Endothelial cell of umbilical vein (primary cell): ENCODE measurements at regions of chr12 and their contacts with region 1.

Region 1: GRCh38 chr12:122190842-122191668 is 8.1 kb downstream of the LRRC43 start:
- DNase-seq: peak; percentile 75
- H3K4me3 ChIP-seq: no peak overlapping the region
- H3K27ac ChIP-seq: no peak overlapping the region
- H3K4me1 ChIP-seq: no peaks in the 10 kb centered on the region
- H3K27me3 ChIP-seq: no peaks in the 10 kb centered on the region
- CTCF ChIP-seq: peak; percentile 78 to 86
- POLR2A ChIP-seq: no peak

Region 2: GRCh38 chr12:122130150-122130549 is 60.9 kb before region 1 on chr12:
- CTCF ChIA-PET with region 1: interaction called, 115 read pairs
- POLR2A ChIA-PET with region 1: interaction called, 8 read pairs
- dilution Hi-C with region 1: no loop called
- intact Hi-C with region 1: loop called (anchors 1 kb)
- DNase-seq: no peak
- H3K4me3 ChIP-seq: no peak overlapping the region
- H3K27ac ChIP-seq: no peak overlapping the region
- H3K4me1 ChIP-seq: no peaks in the 10 kb centered on the region
- H3K27me3 ChIP-seq: no peaks in the 10 kb centered on the region
- CTCF ChIP-seq: no peak
- POLR2A ChIP-seq: no peak

Region 3: GRCh38 chr12:122137681-122138080 is 53.4 kb before region 1 on chr12:
- CTCF ChIA-PET with region 1: interaction called, 31 read pairs
- POLR2A ChIA-PET with region 1: no interaction called
- dilution Hi-C with region 1: no loop called
- intact Hi-C with region 1: no loop called
- DNase-seq: no peak
- H3K4me3 ChIP-seq: no peak overlapping the region
- H3K27ac ChIP-seq: no peak overlapping the region
- H3K4me1 ChIP-seq: no peaks in the 10 kb centered on the region
- H3K27me3 ChIP-seq: no peaks in the 10 kb centered on the region
- CTCF ChIP-seq: no peak
- POLR2A ChIP-seq: no peak

Region 4: DNA sequence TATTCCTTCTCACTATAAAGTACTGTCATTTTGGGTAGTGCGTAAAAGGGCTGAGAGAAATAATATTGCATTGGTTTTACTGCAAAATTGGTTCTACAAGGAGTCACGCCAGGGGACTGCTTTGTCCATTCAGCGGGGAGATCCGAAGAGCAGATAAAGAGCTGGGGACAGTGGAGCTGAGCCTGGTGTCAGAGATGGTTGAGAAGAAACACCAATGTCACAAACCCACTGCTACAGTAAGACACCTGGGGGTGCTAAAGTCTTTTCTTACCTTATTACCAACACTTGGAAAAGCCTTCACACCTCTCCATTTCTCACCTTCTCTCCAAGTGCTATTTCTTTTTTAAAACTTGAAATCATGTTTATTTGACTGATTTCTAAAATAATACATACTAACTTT is 31.2 kb before region 1 on chr12:
- CTCF ChIA-PET with region 1: interaction called, 18 read pairs
- POLR2A ChIA-PET with region 1: no interaction called
- dilution Hi-C with region 1: no loop called
- intact Hi-C with region 1: loop called (anchors 1 kb)
- DNase-seq: no peak
- H3K4me3 ChIP-seq: no peak overlapping the region
- H3K27ac ChIP-seq: no peak overlapping the region
- H3K4me1 ChIP-seq: no peaks in the 10 kb centered on the region
- H3K27me3 ChIP-seq: no peaks in the 10 kb centered on the region
- CTCF ChIP-seq: peak in 1 of 2 donors; percentile 5
- POLR2A ChIP-seq: no peak